Mammary epithelial cell (primary cell): ENCODE measurements at regions of chr19 and their contacts with region 1.

Region 1: GRCh38 chr19:53612755-53613154 is 19.0 kb upstream of the DPRX start:
- DNase-seq: no peak
- H3K4me3 ChIP-seq: no peak overlapping the region
- H3K27ac ChIP-seq: no peak overlapping the region
- H3K4me1 ChIP-seq: no peaks in the 10 kb centered on the region
- H3K27me3 ChIP-seq: no peaks in the 10 kb centered on the region
- CTCF ChIP-seq: no peak

Region 2: GRCh38 chr19:53554804-53555203 is 58.0 kb before region 1 on chr19:
- CTCF ChIA-PET with region 1: no interaction called
- dilution Hi-C with region 1: loop called (anchors 5 kb)
- in situ Hi-C with region 1: no loop called
- intact Hi-C with region 1: no loop called
- DNase-seq: no peak
- H3K4me3 ChIP-seq: peak overlapping the region; percentile 35 to 75 (median 57)
- H3K27ac ChIP-seq: peak overlapping the region; percentile 51
- H3K4me1 ChIP-seq: peaks cover 8% of the 10 kb centered on the region
- H3K27me3 ChIP-seq: no peaks in the 10 kb centered on the region
- CTCF ChIP-seq: no peak

Region 3: DNA sequence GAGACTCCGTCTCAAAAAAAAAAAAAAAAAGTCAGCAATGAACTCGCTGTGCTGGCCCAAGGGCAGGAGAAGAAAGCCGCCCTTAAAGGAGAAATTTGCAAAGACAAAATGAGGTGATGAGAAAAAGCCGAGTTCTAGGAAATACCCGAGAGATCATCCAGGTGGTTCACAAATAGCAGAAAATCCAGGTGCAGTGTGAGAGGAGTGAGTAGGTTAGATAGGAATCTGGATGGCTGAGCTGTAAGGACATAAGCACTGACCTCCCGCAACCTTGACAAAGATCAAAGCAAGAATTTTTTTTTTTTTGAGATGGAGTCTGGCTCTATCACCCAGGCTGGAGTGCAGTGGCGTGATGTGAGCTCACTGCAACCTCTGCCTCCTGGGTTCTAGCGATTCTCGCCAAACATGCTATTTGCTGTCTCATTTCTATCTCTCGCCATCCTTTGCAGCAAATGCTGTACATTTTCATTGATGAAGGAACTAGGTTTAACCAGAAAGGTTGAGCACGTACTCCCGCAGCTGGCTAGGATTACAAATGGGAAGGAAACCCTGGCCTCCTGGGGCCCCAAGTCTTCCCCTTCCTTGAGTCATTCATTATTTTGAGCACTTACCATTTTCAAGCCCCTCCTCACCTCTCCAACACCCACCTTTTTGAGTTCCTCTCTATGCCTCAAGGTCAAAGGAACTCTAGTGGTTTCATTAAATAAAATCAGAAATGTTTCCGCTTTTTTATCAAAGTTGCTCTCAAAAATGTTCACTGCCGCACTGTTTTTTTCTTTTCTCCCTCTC is 172.5 kb after region 1 on chr19:
- CTCF ChIA-PET with region 1: no interaction called
- dilution Hi-C with region 1: no loop called
- in situ Hi-C with region 1: no loop called
- intact Hi-C with region 1: no loop called
- DNase-seq: peak; percentile 3
- H3K4me3 ChIP-seq: no peak overlapping the region
- H3K27ac ChIP-seq: no peak overlapping the region
- H3K4me1 ChIP-seq: no peaks in the 10 kb centered on the region
- H3K27me3 ChIP-seq: no peaks in the 10 kb centered on the region
- CTCF ChIP-seq: no peak